Left cardiac atrium (tissue), 4 donors: ENCODE measurements at regions of chr7 and their contacts with region 1.

Region 1: DNA sequence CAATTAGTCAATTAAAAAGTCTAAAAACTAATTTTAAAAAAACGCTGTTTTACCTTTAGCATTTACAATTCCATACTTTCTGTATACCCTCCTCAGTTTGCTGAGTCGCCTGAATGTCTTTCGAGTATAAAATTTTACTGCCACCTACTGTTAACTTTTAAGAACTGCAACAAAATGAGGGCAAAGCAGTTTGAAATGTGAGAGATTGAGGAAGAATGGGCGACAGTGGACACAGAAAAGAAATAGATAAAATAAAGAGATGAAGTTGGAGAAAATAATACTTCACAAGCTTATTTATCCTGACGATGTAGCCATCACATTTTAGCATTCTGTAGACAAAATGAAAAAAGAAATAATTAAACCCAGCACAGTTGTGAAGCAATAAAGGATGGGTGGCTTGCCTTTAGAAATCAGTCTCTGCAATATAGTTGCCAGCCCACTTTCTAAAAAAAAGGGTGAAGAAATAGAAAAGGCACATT is 110.8 kb upstream of the PTN start:
- DNase-seq: no peak
- ATAC-seq: peak; percentile 47 to 72

Region 2: GRCh38 chr7:137169282-137169698 is 285.0 kb before region 1 on chr7:
- intact Hi-C with region 1: loop called in 1 of 2 experiments (anchors 2 kb)
- DNase-seq: peak; percentile 60
- ATAC-seq: peak; percentile 83 to 84